Activated CD8-positive, alpha-beta T cell treated with anti-CD3 and anti-CD28 coated beads, Interleukin-2, amount 10 ng/mL, durations not matched to agents 7 days and 5 days (primary cell): ENCODE measurements at regions of chr20 and their contacts with region 1.

Region 1: GRCh38 chr20:23061734-23062561 is 12.5 kb upstream of the THBD start:
- DNase-seq: no peak
- ATAC-seq: no peak
- H3K4me3 Mint-ChIP-seq: no peak overlapping the region
- H3K27ac Mint-ChIP-seq: no peak overlapping the region
- H3K4me1 Mint-ChIP-seq: no peaks in the 10 kb centered on the region
- H3K27me3 Mint-ChIP-seq: peaks cover 17% of the 10 kb centered on the region

Region 2: DNA sequence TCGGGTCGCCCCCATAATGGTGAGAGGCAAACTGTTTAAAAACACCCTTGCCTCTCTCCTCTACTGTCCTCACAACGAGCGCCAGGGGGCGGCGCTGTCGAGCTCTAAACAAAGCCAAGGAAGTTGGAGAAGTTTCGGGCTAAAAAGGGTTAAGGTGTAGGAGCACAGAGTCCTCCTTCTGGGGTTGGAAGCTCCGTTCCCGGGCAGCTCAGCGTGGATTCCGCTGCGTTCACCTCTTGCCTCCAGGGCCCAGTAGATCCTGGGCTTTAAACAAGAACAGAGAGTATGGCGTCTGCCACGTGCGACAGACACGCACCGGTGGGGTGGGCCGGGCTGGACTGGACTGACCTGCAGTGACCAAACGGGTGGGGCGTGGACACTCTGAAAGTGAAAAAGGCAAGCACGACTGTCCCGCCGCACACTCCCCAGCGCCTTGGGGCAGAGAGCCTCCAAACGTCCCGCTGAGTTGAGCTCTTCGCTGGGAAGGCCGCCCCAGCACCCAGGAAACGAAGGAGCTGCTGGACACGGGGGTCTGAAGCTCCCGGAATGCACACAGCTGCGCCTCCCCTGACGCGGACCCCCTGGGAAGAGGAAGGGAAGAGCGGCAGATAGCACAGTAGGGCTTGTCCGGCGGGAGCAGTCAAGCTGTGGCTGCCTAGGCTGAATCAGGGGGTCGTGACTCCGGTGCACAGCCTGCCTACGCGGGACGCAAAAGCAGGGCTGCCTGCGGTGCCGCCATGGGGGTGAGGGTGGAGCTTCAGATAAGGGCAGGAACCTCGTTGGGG is 10.9 kb before region 1 on chr20:
- CTCF ChIA-PET with region 1: interaction called, 10 read pairs
- POLR2A ChIA-PET with region 1: no interaction called
- DNase-seq: peak; percentile 45
- ATAC-seq: no peak
- H3K4me3 Mint-ChIP-seq: no peak overlapping the region
- H3K27ac Mint-ChIP-seq: no peak overlapping the region
- H3K4me1 Mint-ChIP-seq: peaks cover 6% of the 10 kb centered on the region
- H3K27me3 Mint-ChIP-seq: peaks cover 58% of the 10 kb centered on the region

Region 3: DNA sequence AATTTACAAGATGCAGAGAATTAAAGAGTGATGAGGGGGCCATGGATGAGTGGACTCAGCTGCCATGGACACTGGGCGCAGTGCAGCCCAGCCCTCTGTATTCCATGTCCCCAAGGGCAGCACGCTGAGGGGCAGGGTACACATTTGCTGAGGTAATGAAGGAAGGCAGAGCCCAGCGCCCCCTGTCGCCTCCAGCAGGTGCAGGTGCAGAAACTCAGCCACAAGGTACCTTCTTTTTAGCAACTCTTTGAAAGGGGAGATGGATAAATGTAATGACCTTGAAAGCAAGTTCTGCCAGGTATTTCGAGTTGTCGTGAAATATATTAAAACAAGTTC is 17.0 kb after region 1 on chr20:
- CTCF ChIA-PET with region 1: no interaction called
- POLR2A ChIA-PET with region 1: no interaction called
- DNase-seq: no peak
- ATAC-seq: no peak
- H3K4me3 Mint-ChIP-seq: no peak overlapping the region
- H3K27ac Mint-ChIP-seq: no peak overlapping the region
- H3K4me1 Mint-ChIP-seq: peaks cover 6% of the 10 kb centered on the region
- H3K27me3 Mint-ChIP-seq: peaks cover 16% of the 10 kb centered on the region

Region 4: DNA sequence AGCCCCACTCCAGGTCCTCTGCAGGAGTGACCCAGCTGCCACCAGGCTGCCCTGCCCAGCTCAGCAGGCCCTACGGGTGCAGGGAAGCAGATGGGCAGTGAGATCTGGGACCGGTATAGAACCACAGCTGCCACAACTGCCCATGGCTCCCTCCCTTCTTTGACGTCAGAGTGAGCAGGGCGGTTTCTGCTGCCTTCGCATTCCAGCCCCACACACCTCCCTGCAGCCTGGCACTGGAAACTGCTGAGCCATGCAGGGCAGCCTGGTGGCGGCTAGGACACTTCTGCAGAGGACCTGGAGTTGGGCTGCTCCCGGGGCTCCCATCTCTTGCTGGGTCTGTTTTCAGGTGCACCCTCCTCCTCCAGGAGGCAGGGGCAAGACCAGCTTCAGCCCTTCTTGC is 125.8 kb after region 1 on chr20:
- CTCF ChIA-PET with region 1: no interaction called
- POLR2A ChIA-PET with region 1: no interaction called
- DNase-seq: no peak
- ATAC-seq: no peak
- H3K4me3 Mint-ChIP-seq: no peak overlapping the region
- H3K27ac Mint-ChIP-seq: no peak overlapping the region
- H3K4me1 Mint-ChIP-seq: no peaks in the 10 kb centered on the region
- H3K27me3 Mint-ChIP-seq: no peaks in the 10 kb centered on the region